PC-3 (cell line): ENCODE measurements at regions of chr10 and their contacts with region 1.

Region 1: DNA sequence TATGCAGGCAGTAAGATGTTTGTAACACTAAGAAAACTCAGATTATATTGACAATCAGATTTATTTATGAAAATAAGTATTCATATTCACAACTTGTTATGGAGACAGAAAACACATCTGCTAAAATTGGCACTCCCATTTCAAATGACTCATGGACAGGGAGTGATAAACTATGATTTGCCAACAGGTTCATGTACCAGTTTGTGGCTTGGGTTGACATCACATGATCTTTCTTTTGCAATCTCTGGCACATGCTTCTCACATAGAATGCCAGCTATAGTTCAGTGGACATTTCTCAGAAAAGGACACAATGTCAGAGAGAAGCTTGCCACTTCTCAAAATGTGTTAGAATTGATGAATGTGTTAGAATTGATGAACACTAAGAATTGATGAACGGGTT is 663.2 kb upstream of the ANKRD30A start:
- DNase-seq: peak; percentile 95
- ATAC-seq: no peak
- H3K4me3 ChIP-seq: no peak overlapping the region
- H3K27ac ChIP-seq: no peak overlapping the region
- H3K4me1 ChIP-seq: peaks cover 40% of the 10 kb centered on the region
- H3K27me3 ChIP-seq: no peaks in the 10 kb centered on the region
- CTCF ChIP-seq: no peak

Region 2: DNA sequence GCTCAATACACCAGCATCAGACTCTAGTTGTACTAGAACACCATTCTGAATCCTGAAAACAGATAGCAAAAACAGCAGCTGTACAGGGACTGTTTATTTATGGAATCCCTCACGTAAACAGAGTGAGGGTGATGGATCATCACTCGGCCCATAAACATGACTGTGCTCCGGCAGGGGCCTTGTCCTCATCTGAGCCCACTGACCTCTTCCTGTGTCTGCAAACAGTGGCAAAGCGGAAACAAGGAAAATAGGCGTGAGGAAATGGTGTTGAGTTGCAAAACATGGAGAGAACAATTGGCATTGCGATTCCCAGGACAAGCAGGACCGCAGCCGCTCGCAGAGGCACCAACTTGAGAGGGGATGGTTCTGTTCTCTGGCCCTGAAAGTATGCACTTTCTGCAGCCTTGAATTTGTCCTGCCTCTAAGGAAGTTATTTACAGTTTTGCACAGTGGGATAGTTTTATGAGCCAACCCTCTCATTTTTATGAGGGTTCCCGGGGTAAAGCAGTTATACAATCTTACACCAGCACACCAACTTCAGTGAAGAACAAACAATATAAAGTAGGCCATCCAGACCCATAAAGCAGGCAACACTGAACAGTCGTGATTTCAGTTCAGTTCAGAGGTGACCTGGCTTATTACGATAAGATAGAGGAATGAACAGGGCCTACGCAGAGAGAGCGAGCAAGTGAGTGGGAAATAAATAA is 572.1 kb before region 1 on chr10:
- CTCF ChIA-PET with region 1: no interaction called
- POLR2A ChIA-PET with region 1: no interaction called
- intact Hi-C with region 1: loop called (anchors 2 kb)
- DNase-seq: peak; percentile 74
- ATAC-seq: peak; percentile 90
- H3K4me3 ChIP-seq: no peak overlapping the region
- H3K27ac ChIP-seq: peak overlapping the region; percentile 38
- H3K4me1 ChIP-seq: peaks cover 25% of the 10 kb centered on the region
- H3K27me3 ChIP-seq: no peaks in the 10 kb centered on the region
- CTCF ChIP-seq: no peak

Region 3: GRCh38 chr10:36344240-36345174 is 117.7 kb before region 1 on chr10:
- CTCF ChIA-PET with region 1: interaction called, 3 read pairs
- POLR2A ChIA-PET with region 1: no interaction called
- intact Hi-C with region 1: loop called (anchors 2 kb)
- DNase-seq: peak; percentile 91
- ATAC-seq: peak; percentile 88
- H3K4me3 ChIP-seq: 0 out of 2 replicates have a peak overlapping the region, but pooled peaks have one; percentile 2
- H3K27ac ChIP-seq: peak overlapping the region; percentile 76
- H3K4me1 ChIP-seq: peaks cover 28% of the 10 kb centered on the region
- H3K27me3 ChIP-seq: no peaks in the 10 kb centered on the region
- CTCF ChIP-seq: no peak

Region 4: DNA sequence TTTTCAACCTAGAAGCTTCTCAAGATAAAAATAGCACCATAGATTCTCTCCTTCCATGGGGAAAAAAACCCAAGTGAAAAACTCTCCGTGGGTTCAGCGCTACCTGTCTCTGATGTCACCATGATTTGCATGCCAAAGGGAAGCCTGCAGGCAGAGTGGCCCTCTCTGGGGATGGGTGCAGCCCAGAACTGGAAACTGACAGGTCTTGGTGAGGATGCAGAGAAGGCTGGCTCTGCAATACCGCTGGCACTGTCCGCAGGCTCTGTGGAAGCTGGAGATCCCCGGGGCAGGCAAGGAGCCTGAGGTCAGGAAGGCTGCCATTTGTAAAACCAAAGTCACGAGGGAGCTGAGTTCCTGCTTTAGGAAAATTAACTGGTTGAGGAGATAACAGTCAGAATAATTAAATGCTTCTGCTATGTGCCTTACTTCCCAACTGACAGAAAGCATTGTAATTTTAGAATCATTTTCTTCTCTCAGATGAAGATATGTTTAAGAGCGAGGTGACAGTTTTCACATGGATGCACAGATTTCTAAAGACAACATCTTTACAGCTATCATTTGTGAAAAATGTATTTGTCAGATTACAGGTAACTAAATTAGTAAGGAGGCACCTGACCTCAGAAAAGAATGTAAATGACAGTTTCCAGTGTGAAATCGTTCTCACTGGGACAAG is 88.6 kb before region 1 on chr10:
- CTCF ChIA-PET with region 1: interaction called, 11 read pairs
- POLR2A ChIA-PET with region 1: no interaction called
- intact Hi-C with region 1: no loop called
- DNase-seq: no peak
- ATAC-seq: no peak
- H3K4me3 ChIP-seq: no peak overlapping the region
- H3K27ac ChIP-seq: no peak overlapping the region
- H3K4me1 ChIP-seq: peaks cover 6% of the 10 kb centered on the region
- H3K27me3 ChIP-seq: no peaks in the 10 kb centered on the region
- CTCF ChIP-seq: no peak

Region 5: DNA sequence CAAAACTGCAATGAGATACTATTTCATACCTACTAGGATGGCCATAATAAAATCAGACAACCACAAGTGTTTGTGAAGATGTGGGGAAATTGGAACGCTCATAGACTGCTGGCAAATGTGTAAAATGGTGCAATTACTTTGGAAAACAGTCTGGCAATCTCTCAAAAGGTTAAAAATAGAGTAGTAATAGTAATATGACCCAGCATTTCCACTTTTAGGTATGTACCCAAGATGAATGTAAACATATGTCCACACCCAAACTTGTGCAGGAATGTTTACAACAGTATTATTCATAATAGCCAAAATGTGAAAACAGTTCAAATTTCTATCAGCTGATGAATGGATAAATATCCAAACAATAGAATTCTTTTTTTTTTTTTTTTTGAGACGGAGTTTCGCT is 68.4 kb before region 1 on chr10:
- CTCF ChIA-PET with region 1: interaction called, 3 read pairs
- POLR2A ChIA-PET with region 1: no interaction called
- intact Hi-C with region 1: loop called (anchors 1 kb)
- DNase-seq: peak; percentile 99
- ATAC-seq: peak; percentile 88
- H3K4me3 ChIP-seq: no peak overlapping the region
- H3K27ac ChIP-seq: peak overlapping the region; percentile 21
- H3K4me1 ChIP-seq: peaks cover 13% of the 10 kb centered on the region
- H3K27me3 ChIP-seq: no peaks in the 10 kb centered on the region
- CTCF ChIP-seq: no peak

Region 6: DNA sequence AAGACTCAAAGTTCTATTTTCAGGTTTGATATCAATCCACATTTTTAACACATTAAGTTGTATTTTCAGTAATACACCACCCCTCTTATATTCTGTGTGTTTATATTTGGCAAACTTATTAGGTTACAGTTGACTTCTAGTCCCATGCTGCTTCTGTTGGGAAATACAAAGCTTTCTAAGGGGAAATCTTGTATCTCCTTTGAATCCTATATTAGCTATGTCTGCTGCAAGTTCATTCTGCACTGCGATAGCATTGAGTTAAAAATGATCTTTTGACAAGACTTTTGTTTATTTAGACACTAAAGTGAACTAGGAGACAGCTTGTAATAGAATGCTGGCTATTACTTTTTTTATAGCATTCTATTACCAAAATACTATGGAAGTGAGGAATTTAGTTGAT is 38.1 kb after region 1 on chr10:
- CTCF ChIA-PET with region 1: no interaction called
- POLR2A ChIA-PET with region 1: no interaction called
- intact Hi-C with region 1: no loop called
- DNase-seq: peak; percentile 40
- ATAC-seq: peak; percentile 23
- H3K4me3 ChIP-seq: no peak overlapping the region
- H3K27ac ChIP-seq: peak overlapping the region; percentile 64
- H3K4me1 ChIP-seq: peaks cover 47% of the 10 kb centered on the region
- H3K27me3 ChIP-seq: no peaks in the 10 kb centered on the region
- CTCF ChIP-seq: no peak

Region 7: DNA sequence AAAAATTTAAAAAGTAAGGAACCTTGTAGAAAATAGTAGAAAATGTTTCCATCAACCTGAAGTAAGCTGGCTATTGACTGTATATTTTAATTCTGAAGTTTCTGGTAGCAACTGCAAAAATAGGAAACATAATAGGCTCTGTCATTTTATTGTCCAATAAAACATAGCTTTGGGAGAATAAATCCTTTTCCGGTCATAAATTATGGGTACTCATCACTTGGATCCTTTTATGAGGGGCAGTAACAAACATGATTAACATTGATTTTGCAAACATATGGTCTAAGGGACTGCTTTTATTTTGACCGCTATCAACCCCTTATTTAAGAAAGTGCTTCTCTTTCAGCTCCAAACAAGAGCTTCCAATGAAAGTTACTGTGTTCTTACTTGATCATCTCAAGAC is 167.3 kb after region 1 on chr10:
- CTCF ChIA-PET with region 1: no interaction called
- POLR2A ChIA-PET with region 1: no interaction called
- intact Hi-C with region 1: loop called (anchors 1 kb)
- DNase-seq: peak; percentile 76
- ATAC-seq: peak; percentile 71
- H3K4me3 ChIP-seq: no peak overlapping the region
- H3K27ac ChIP-seq: peak overlapping the region; percentile 81
- H3K4me1 ChIP-seq: peaks cover 24% of the 10 kb centered on the region
- H3K27me3 ChIP-seq: no peaks in the 10 kb centered on the region
- CTCF ChIP-seq: no peak

Region 8: DNA sequence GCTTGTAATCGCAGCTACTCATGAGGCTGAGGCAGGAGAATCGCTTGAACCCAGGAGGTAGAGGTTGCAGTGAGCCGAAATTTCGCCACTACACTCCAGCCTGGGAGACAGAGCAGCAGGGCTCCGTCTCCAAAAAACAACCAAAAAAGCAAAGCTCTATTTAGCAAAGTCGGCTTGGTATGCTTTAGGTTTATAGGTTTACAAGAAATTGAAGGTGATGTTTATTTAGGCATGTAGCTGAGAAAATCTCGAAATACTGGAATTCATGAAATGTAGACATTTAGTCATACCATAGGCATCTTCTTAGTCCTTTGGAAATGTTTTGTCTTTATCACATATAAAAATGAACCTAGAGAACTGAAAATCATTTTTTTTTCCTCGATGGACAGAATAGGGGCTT is 209.4 kb after region 1 on chr10:
- CTCF ChIA-PET with region 1: no interaction called
- POLR2A ChIA-PET with region 1: no interaction called
- intact Hi-C with region 1: loop called (anchors 1 kb)
- DNase-seq: peak; percentile 99
- ATAC-seq: peak; percentile 66
- H3K4me3 ChIP-seq: peak overlapping the region; percentile 26; the same call in 1 of the 2 replicates
- H3K27ac ChIP-seq: peak overlapping the region; percentile 70
- H3K4me1 ChIP-seq: peaks cover 46% of the 10 kb centered on the region
- H3K27me3 ChIP-seq: no peaks in the 10 kb centered on the region
- CTCF ChIP-seq: no peak